Activated naive CD4-positive, alpha-beta T cell treated with anti-CD3 and anti-CD28 coated beads for 36 hours (primary cell): ENCODE measurements at regions of chr5 and their contacts with region 1.

Region 1: DNA sequence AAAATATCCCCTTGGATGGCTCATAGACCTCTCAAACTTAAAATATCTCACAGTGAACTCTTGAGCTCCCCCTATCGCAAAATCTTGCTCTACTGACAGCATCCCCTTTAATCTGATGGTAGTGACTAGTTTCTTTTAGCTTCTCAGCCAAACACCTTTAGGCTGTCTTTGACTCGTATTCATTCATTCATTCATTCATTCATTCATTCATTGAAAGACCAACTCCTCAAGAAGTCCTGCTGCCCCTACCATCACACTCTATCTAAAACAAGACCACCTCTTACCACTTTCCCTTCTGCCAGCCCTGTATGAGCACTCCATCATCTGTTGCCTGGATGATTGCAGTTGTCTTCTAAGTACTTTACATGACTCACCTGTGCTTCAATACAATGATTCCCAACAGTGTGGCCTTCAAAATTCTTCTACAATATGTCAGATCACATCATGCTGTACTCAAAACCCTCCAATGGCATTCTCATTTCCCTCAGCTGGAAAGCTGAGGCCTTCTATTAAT is 46.8 kb downstream of the ITGA2 start:
- DNase-seq: no peak
- H3K4me3 Mint-ChIP-seq: no peak overlapping the region
- H3K27ac Mint-ChIP-seq: no peak overlapping the region
- H3K4me1 Mint-ChIP-seq: peaks cover 39% of the 10 kb centered on the region
- H3K27me3 Mint-ChIP-seq: no peaks in the 10 kb centered on the region

Region 2: DNA sequence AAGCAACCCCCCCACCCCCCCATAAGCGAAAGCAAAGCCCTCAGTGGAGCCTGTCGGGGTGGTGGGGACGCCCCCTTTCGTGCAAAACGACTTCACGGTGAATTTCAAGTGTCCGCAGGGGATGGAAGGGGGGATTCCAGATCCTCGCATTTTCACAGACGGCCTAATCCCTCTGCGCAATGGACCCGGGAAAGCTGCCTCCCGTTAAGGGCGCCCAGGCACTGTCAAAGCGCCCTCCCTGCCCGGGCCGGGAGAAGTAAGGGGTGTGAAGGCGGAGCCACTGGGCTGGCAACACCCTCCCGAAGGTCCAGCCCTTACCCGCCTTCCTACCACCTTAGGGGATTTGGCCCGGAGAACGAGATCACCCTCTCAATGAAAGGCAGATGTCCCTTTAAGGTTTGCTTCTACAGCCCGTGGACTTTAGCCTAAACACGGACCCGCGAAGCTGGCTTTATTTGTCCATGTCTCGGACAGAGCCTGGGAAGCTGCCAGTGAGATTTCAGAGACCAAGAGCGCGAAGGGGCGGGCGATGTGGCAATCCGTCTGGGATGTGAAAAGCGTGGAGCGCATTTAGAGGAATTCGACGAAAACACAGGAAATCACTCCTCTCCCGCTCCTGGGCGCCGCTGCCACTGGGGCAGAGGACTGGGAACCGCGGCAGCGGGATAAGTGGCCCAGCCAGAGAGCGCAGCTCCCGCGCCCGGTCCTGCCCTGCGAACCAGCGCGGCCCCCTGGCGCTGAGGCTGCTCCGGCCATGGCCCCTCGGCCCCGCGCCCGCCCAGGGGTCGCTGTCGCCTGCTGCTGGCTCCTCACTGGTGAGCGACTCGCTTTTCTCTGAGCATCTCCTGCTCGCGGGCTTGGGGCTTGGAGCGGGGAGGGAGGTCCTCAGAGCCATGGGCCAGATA is 248.1 kb before region 1 on chr5 and contains the starts of genes ITGA1 and PELO:
- CTCF ChIA-PET with region 1: no interaction called
- intact Hi-C with region 1: no loop called
- DNase-seq: peak; percentile 79
- H3K4me3 Mint-ChIP-seq: peak within 1 kb of the TSS; percentile 84
- H3K27ac Mint-ChIP-seq: peak within 1 kb of the TSS; percentile 44
- H3K4me1 Mint-ChIP-seq: peaks cover 15% of the 10 kb centered on the region
- H3K27me3 Mint-ChIP-seq: peaks cover 4% of the 10 kb centered on the region
- total RNA-seq, gene ITGA1: 0.69 to 1.2 TPM
- total RNA-seq, gene PELO: 11.4 to 12.8 TPM

Region 3: GRCh38 chr5:52989781-52990527 is 46.0 kb before region 1 on chr5:
- CTCF ChIA-PET with region 1: interaction called, 7 read pairs
- intact Hi-C with region 1: loop called (anchors 1 kb)
- DNase-seq: peak; percentile 73
- H3K4me3 Mint-ChIP-seq: peak overlapping the region; percentile 79
- H3K27ac Mint-ChIP-seq: peak overlapping the region; percentile 50
- H3K4me1 Mint-ChIP-seq: peaks cover 21% of the 10 kb centered on the region
- H3K27me3 Mint-ChIP-seq: peaks cover 4% of the 10 kb centered on the region

Region 4: DNA sequence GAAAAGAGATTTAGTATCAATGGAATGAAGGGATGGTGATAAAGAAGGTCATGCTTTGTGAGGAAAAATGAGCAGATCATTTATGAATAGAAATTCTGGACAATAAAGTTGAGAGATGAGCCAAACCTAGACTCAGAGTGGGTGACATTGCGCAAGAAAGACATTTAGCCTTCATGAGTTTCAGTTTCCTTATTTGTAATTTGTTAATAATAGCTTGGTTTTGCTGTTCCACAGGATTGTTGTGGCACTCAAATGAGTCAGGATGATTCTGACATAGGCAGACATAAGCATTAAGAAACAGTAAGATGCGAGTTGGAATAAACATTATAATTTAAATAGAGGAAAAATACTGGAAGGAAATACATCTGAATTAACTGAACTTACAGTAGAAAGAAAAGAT is 12.0 kb before region 1 on chr5:
- CTCF ChIA-PET with region 1: interaction called, 3 read pairs
- intact Hi-C with region 1: loop called (anchors 1 kb)
- DNase-seq: peak; percentile 23
- H3K4me3 Mint-ChIP-seq: no peak overlapping the region
- H3K27ac Mint-ChIP-seq: no peak overlapping the region
- H3K4me1 Mint-ChIP-seq: peaks cover 7% of the 10 kb centered on the region
- H3K27me3 Mint-ChIP-seq: no peaks in the 10 kb centered on the region

Region 5: DNA sequence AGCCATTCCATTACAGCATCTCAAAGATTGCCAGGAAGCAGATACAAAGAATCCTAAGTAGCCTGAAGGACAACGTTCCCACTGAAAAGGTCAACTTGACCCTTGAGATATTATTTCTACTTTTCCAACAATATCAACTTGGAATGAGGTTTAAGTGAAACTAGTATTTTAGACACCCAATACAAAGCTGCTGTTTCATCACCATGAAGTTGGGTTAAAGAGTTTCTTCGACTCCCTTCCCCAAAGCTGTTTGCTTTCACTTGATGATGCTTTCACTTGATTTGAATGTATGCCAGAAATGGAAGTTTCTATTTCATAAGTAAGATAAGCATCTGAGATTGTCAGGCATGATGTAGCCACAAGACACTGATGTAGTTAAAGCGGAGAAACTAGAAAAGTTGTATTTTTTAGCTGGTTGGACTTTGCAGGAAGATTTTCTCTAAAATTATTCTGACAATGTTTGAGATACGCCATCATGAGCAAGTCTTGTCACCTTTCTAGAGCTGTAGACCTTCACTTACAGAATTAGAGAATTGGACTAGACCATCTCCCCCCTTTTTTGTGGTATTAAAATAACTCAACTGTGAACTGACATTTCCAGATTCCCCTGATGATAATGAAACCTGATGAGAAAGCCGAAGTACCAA is 53.5 kb after region 1 on chr5:
- CTCF ChIA-PET with region 1: interaction called, 11 read pairs
- intact Hi-C with region 1: loop called (anchors 1 kb)
- DNase-seq: no peak
- H3K4me3 Mint-ChIP-seq: peak overlapping the region; percentile 45
- H3K27ac Mint-ChIP-seq: peak overlapping the region; percentile 61
- H3K4me1 Mint-ChIP-seq: peaks cover 32% of the 10 kb centered on the region
- H3K27me3 Mint-ChIP-seq: no peaks in the 10 kb centered on the region

Region 6: GRCh38 chr5:53109443-53110127 is 73.7 kb after region 1 on chr5 and contains the start of gene MOCS2:
- CTCF ChIA-PET with region 1: no interaction called
- intact Hi-C with region 1: loop called (anchors 1 kb)
- DNase-seq: peak; percentile 91
- H3K4me3 Mint-ChIP-seq: peak within 1 kb of the TSS; percentile 92
- H3K27ac Mint-ChIP-seq: peak within 1 kb of the TSS; percentile 86
- H3K4me1 Mint-ChIP-seq: peaks cover 37% of the 10 kb centered on the region
- H3K27me3 Mint-ChIP-seq: no peaks in the 10 kb centered on the region
- total RNA-seq, gene MOCS2: 29.4 to 30.9 TPM

Region 7: GRCh38 chr5:53779541-53779981 is 743.6 kb after region 1 on chr5:
- CTCF ChIA-PET with region 1: no interaction called
- intact Hi-C with region 1: no loop called
- DNase-seq: peak; percentile 5
- H3K4me3 Mint-ChIP-seq: no peak overlapping the region
- H3K27ac Mint-ChIP-seq: no peak overlapping the region
- H3K4me1 Mint-ChIP-seq: peaks cover 13% of the 10 kb centered on the region
- H3K27me3 Mint-ChIP-seq: peaks cover 4% of the 10 kb centered on the region